HCT116 (cell line): ENCODE measurements at regions of chr5 and their contacts with region 1.

Region 1: DNA sequence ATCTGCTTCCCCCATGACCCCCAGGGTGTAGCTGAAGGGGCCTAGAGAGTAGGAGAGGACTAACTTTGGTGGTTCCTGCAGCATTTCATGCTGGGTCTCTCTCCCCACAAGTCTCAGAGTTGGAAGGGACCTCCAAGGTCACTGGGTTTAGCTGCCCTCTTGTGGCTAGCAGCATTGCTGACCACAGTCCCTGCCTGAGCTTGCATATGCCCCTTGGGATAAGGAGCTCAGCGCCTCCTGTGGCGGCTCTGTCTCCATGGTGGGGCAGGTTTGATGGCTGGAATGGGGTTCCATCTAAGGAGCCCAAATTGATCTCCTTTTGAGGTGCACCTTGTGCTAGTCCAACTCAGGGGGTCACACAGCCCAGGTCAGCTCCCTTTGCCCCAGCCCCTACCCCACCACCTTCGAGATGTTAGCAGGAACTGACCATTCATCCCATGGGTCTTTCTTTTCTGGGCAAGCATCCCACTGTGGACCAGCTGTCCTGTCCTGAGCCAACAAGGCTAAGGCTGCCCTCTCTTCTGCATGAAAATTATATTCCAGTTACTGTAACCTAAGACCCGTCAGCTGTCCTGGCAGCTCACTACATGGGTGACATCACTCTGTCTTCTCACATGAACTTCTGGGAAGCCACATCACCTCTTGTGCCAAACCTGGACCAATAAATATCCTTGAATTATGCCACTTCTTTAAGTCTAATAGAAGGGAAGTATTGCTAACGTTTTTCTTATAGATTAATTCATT is 196.2 kb downstream of the HSPA4 start:
- DNase-seq: peak; percentile 60
- ATAC-seq: peak; percentile 57
- H3K4me3 ChIP-seq: no peak overlapping the region
- H3K27ac ChIP-seq: no peak overlapping the region
- H3K4me1 ChIP-seq: peaks cover 27 to 58% of the 10 kb centered on the region in 2 experiments
- H3K27me3 ChIP-seq: no peaks in the 10 kb centered on the region
- CTCF ChIP-seq: peak in 2 of 3 experiments; percentile 69 to 89; a peak in 4 of 6 replicates
- POLR2A ChIP-seq: no peak
- RAD21 ChIP-seq: no peak

Region 2: DNA sequence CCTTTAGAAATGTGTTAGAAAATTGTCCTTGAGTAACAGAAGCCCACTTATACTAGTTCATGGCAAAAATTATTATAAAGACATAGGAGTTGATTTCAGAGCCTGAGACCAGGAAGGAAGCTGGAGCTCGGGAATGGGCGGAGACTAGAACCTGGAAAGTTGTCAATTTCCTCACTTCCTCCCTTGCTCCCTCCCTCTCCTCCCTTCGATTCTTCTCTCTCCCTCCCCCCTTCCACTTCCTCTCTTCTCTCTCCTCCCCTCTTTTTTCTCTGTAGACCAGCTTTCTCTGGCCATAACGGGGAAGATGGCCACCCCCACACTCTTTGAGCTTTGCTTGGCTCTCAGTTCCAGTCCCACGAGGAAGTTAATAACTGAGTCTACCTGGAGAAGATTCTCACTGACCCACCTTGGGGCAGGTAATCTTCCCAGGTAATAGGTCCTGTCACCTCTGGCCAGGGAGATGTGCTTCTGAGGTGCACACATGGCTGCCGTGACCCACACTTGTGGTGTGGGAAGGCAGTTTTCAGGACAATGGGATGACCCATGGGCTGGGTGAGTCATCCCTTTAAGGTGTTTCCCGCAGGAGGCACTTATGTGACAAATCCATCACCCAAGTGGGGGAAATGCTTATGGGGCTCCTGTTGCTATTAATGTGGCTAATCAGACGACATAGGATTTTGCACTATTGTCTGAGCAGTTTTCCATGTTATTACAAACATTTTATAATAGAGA is 117.5 kb before region 1 on chr5:
- CTCF ChIA-PET with region 1: interaction called, 10 read pairs
- POLR2A ChIA-PET with region 1: interaction called, 3 read pairs
- RAD21 ChIA-PET with region 1: no interaction called
- intact Hi-C with region 1: loop called (anchors 5 kb)
- DNase-seq: peak; percentile 53
- ATAC-seq: peak; percentile 88
- H3K4me3 ChIP-seq: peak overlapping the region; percentile 30 to 49
- H3K27ac ChIP-seq: peak overlapping the region; percentile 25; the same call in 1 of the 2 replicates
- H3K4me1 ChIP-seq: peaks cover 13 to 18% of the 10 kb centered on the region in 2 experiments
- H3K27me3 ChIP-seq: no peaks in the 10 kb centered on the region
- CTCF ChIP-seq: no peak
- POLR2A ChIP-seq: peak; percentile 27
- RAD21 ChIP-seq: 0 out of 2 replicates have a peak, but pooled peaks have one; percentile 10

Region 3: GRCh38 chr5:133225671-133226152 is 22.3 kb before region 1 on chr5:
- CTCF ChIA-PET with region 1: interaction called, 11 read pairs
- POLR2A ChIA-PET with region 1: interaction called, 3 read pairs
- RAD21 ChIA-PET with region 1: interaction called in 1 of 2 experiments, 3 read pairs
- intact Hi-C with region 1: no loop called
- DNase-seq: no peak
- ATAC-seq: peak; percentile 46
- H3K4me3 ChIP-seq: peak overlapping the region in 1 of 2 experiments; percentile 5; a peak in 1 of 4 replicates
- H3K27ac ChIP-seq: no peak overlapping the region; the same call in 1 of the 2 replicates
- H3K4me1 ChIP-seq: peaks cover 21 to 43% of the 10 kb centered on the region in 2 experiments
- H3K27me3 ChIP-seq: no peaks in the 10 kb centered on the region
- CTCF ChIP-seq: no peak
- POLR2A ChIP-seq: no peak
- RAD21 ChIP-seq: no peak

Region 4: GRCh38 chr5:133287500-133287899 is 39.4 kb after region 1 on chr5:
- CTCF ChIA-PET with region 1: interaction called, 10 read pairs
- POLR2A ChIA-PET with region 1: no interaction called
- RAD21 ChIA-PET with region 1: interaction called in 1 of 2 experiments, 4 read pairs
- intact Hi-C with region 1: no loop called
- DNase-seq: peak; percentile 28
- ATAC-seq: peak; percentile 66
- H3K4me3 ChIP-seq: no peak overlapping the region
- H3K27ac ChIP-seq: no peak overlapping the region
- H3K4me1 ChIP-seq: peaks cover 18 to 44% of the 10 kb centered on the region in 2 experiments
- H3K27me3 ChIP-seq: no peaks in the 10 kb centered on the region
- CTCF ChIP-seq: peak; percentile 62 to 79 (median 78)
- POLR2A ChIP-seq: no peak
- RAD21 ChIP-seq: peak; percentile 85

Region 5: DNA sequence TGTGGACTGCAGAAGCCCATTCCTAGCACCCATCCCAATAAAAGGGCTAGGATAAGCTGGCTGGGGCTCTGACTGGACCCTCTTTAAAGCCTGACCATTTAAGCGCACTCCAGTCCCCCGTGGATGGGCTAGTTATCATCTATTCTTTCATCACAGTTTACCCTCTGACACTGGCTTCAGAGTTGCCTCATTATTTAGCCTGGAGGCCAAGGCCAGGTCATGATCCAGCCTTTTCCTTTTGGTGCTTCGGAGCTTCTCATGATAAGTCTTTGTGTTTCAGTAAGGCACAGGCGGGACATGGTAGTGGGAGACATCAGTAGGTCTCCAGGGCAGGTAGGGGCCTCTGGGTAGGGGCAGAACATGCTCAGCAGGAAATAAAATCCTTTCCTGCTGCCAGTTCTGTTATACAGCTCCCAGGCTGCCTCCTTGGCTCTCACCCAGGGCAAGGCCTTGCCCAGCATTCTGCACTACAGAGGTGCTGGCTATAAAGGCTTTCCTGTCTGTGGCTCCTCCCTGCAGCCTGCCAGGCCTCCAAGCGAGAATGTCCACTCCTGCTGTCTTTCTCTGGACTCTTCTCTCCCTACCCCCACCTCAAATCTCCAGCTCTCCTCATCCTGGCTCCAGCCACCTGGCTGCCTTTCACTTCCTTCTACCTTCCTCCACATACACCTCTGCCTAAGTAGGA is 235.5 kb after region 1 on chr5:
- CTCF ChIA-PET with region 1: no interaction called
- POLR2A ChIA-PET with region 1: no interaction called
- RAD21 ChIA-PET with region 1: no interaction called
- intact Hi-C with region 1: no loop called
- DNase-seq: no peak
- ATAC-seq: no peak
- H3K4me3 ChIP-seq: no peak overlapping the region
- H3K27ac ChIP-seq: no peak overlapping the region
- H3K4me1 ChIP-seq: no peaks in the 10 kb centered on the region
- H3K27me3 ChIP-seq: peaks cover 18% of the 10 kb centered on the region
- CTCF ChIP-seq: no peak
- POLR2A ChIP-seq: no peak
- RAD21 ChIP-seq: no peak